HCT116 (cell line): ENCODE measurements at regions of chr3 and their contacts with region 1.

Region 1: GRCh38 chr3:134473868-134474546 is 11.8 kb downstream of the ANAPC13 start:
- DNase-seq: peak; percentile 51
- ATAC-seq: peak; percentile 89
- H3K4me3 ChIP-seq: no peak overlapping the region
- H3K27ac ChIP-seq: no peak overlapping the region
- H3K4me1 ChIP-seq: peaks cover 3 to 16% of the 10 kb centered on the region in 2 experiments; a peak in 3 of 4 replicates
- H3K27me3 ChIP-seq: no peaks in the 10 kb centered on the region
- CTCF ChIP-seq: peak; percentile 66 to 87 (median 80)
- POLR2A ChIP-seq: no peak
- RAD21 ChIP-seq: peak; percentile 95

Region 2: DNA sequence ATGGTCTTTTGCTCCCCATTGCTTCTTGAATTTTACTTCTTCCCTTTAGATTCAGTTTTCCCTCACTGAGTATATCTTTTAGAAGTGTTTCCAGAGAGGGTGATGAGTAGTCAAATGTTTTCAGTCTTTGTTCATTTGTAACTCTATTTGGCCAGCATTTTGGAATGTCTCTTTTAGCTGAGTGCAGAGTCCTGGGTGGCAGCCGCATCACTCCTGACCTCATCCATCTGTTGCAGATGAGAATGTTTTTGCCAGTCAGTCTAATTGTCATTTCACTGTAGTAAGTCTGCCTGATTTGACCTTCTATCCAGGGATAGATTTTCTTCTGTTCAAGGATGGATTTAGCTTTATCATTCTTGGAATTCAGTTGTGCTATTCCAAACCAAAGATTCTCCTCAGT is 661.1 kb before region 1 on chr3:
- CTCF ChIA-PET with region 1: no interaction called
- POLR2A ChIA-PET with region 1: no interaction called
- RAD21 ChIA-PET with region 1: no interaction called
- intact Hi-C with region 1: loop called (anchors 10 kb)
- DNase-seq: no peak
- ATAC-seq: no peak
- H3K4me3 ChIP-seq: no peak overlapping the region
- H3K27ac ChIP-seq: no peak overlapping the region
- H3K4me1 ChIP-seq: no peaks in the 10 kb centered on the region
- H3K27me3 ChIP-seq: no peaks in the 10 kb centered on the region
- CTCF ChIP-seq: no peak
- POLR2A ChIP-seq: no peak
- RAD21 ChIP-seq: no peak

Region 3: DNA sequence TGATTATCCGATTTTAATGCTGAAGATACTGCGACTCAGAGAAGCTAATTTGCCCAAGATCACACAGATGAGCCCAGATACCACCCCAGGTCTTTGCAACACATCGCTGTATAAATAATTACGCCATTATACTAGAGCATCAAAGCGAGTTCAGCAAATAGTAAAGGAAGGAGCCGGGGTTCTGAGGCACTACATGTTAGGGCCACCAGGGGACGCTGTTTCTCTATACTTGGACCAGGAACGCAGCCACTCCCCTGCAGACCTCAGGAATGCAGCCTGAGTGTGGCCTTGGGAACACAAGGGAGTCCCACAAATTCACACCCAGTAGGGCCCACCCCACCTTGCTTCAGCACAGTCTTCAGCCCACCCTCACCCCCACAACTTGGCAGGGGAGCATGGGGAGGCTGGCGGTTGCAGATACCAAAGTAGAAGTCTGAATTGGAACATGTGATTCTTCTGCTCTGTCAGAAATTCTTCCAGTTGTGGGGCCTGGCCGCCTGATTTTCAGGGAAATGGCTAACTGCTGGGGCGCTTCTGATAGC is 165.6 kb before region 1 on chr3:
- CTCF ChIA-PET with region 1: interaction called, 71 read pairs
- POLR2A ChIA-PET with region 1: interaction called, 3 read pairs
- RAD21 ChIA-PET with region 1: interaction called, 6 to 13 read pairs
- intact Hi-C with region 1: loop called (anchors 1 kb)
- DNase-seq: peak; percentile 63
- ATAC-seq: peak; percentile 71
- H3K4me3 ChIP-seq: peak overlapping the region; percentile 17 to 30; a peak in 1 of 4 replicates
- H3K27ac ChIP-seq: peak overlapping the region; percentile 32; the same call in 1 of the 2 replicates
- H3K4me1 ChIP-seq: peaks cover 25 to 39% of the 10 kb centered on the region in 2 experiments
- H3K27me3 ChIP-seq: no peaks in the 10 kb centered on the region
- CTCF ChIP-seq: peak in 2 of 3 experiments; percentile 98 to 99; a peak in 4 of 6 replicates
- POLR2A ChIP-seq: no peak
- RAD21 ChIP-seq: no peak

Region 4: GRCh38 chr3:134357261-134358184 is 116.5 kb before region 1 on chr3:
- CTCF ChIA-PET with region 1: no interaction called
- POLR2A ChIA-PET with region 1: no interaction called
- RAD21 ChIA-PET with region 1: no interaction called
- intact Hi-C with region 1: loop called (anchors 5 kb)
- DNase-seq: peak; percentile 52
- ATAC-seq: peak; percentile 85
- H3K4me3 ChIP-seq: peak overlapping the region in 1 of 2 experiments; percentile 12; a peak in 1 of 4 replicates
- H3K27ac ChIP-seq: peak overlapping the region; percentile 73
- H3K4me1 ChIP-seq: peaks cover 34 to 77% of the 10 kb centered on the region in 2 experiments
- H3K27me3 ChIP-seq: no peaks in the 10 kb centered on the region
- CTCF ChIP-seq: no peak
- POLR2A ChIP-seq: no peak
- RAD21 ChIP-seq: no peak

Region 5: GRCh38 chr3:134373994-134374790 is 99.8 kb before region 1 on chr3 and contains the start of gene AMOTL2:
- CTCF ChIA-PET with region 1: interaction called, 5 read pairs
- POLR2A ChIA-PET with region 1: interaction called, 4 read pairs
- RAD21 ChIA-PET with region 1: no interaction called
- intact Hi-C with region 1: loop called (anchors 5 kb)
- DNase-seq: peak; percentile 87
- ATAC-seq: peak; percentile 71
- H3K4me3 ChIP-seq: peak within 1 kb of the TSS; percentile 57 to 92
- H3K27ac ChIP-seq: peak within 1 kb of the TSS; percentile 98
- H3K4me1 ChIP-seq: peaks cover 40 to 79% of the 10 kb centered on the region in 2 experiments
- H3K27me3 ChIP-seq: no peaks in the 10 kb centered on the region
- CTCF ChIP-seq: no peak
- POLR2A ChIP-seq: peak; percentile 88
- RAD21 ChIP-seq: no peak
- total RNA-seq, gene AMOTL2: 54.0 TPM

Region 6: DNA sequence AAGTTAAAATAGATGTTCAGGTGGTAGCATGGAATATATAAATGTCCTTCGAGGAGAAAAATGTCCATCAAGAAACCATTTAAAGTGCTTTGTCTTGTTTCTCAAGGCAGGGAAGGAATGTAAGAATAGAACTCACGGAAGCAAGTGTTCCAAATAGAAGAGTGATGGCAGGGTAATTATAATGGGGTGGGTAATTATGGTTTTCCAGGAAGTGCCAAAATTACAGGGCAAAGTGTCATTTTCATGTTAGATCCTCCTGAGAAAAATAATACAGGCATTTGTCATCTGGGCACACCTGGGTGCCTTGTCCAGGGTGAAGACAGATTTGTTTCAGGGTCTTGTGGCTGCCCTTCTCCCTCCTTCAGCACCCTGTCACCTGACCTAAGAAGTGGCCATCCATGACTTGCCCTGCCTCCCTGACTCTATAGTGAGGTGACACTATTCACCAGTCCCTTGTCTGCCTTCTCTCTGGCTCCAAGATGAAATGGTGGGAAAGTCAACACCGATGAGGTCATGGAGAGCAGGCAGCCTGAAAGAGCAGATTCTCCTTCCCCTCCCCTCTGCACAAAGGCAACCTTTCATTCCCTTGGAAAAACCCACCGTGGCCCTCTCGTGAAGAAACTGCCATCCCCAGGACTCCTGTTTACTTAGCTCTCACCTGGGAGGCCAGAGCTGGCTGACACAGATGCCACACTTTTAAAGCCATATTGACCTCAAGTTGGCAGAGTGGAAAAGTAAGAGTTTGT is 54.6 kb before region 1 on chr3:
- CTCF ChIA-PET with region 1: no interaction called
- POLR2A ChIA-PET with region 1: no interaction called
- RAD21 ChIA-PET with region 1: no interaction called
- intact Hi-C with region 1: no loop called
- DNase-seq: no peak
- ATAC-seq: no peak
- H3K4me3 ChIP-seq: no peak overlapping the region
- H3K27ac ChIP-seq: no peak overlapping the region
- H3K4me1 ChIP-seq: peaks cover 0 to 5% of the 10 kb centered on the region in 2 experiments; a peak in 2 of 4 replicates
- H3K27me3 ChIP-seq: no peaks in the 10 kb centered on the region
- CTCF ChIP-seq: no peak
- POLR2A ChIP-seq: no peak
- RAD21 ChIP-seq: no peak